ENCODE measurements at regions of chr9 and their contacts with region 1.

Region 1: GRCh38 chr9:127869310-127870152 is 7.9 kb downstream of the AK1 start:
- DNase-seq: peak; percentile 88
- H3K4me3 Mint-ChIP-seq: no peak overlapping the region
- H3K27ac Mint-ChIP-seq: no peak overlapping the region
- H3K4me1 Mint-ChIP-seq: peaks cover 14% of the 10 kb centered on the region
- H3K27me3 Mint-ChIP-seq: no peaks in the 10 kb centered on the region

Region 2: DNA sequence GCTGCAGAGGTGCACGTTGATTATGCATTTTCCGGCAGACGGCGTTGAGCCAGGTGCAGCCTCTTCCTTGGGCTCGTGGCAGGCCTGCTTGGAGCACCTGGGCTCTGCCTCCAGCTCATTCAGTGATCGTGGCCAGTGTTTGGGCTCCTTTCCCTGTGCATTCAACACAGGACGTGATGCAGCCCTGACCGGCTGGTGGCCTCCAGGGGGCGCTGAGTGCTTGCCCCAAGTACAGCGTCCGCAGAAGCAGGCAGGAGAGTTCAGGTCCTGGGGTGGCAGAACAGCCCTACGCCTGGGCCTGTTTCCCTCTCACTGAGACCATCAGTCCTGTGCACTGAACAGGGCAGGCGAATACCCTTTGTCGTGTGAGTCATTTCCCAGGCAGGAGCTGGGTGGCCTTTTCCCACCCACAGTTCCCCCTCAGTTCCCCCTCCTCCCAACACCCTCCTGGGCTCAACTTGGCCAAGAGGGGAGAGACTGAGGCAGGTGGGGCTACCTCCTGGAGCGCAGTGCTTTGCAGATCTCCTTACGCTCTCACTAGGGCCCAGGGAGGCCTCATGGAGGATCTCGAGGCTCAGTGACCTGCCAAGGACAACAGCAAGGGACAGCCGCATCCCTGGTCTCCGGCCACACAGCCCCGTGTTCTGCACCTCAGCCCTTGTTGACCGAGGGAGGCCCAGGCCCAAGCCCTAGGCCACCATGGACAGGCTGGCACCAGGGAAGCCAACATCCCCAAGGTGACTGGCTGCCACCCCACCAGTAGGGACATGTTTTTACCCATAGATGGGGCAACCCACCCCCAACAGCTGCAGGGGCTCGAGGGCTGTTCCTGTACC is 365.4 kb before region 1 on chr9:
- CTCF ChIA-PET with region 1: interaction called, 3 read pairs
- intact Hi-C with region 1: loop called (anchors 5 kb)
- DNase-seq: peak; percentile 88
- H3K4me3 Mint-ChIP-seq: no peak overlapping the region
- H3K27ac Mint-ChIP-seq: no peak overlapping the region
- H3K4me1 Mint-ChIP-seq: no peaks in the 10 kb centered on the region
- H3K27me3 Mint-ChIP-seq: no peaks in the 10 kb centered on the region

Region 3: DNA sequence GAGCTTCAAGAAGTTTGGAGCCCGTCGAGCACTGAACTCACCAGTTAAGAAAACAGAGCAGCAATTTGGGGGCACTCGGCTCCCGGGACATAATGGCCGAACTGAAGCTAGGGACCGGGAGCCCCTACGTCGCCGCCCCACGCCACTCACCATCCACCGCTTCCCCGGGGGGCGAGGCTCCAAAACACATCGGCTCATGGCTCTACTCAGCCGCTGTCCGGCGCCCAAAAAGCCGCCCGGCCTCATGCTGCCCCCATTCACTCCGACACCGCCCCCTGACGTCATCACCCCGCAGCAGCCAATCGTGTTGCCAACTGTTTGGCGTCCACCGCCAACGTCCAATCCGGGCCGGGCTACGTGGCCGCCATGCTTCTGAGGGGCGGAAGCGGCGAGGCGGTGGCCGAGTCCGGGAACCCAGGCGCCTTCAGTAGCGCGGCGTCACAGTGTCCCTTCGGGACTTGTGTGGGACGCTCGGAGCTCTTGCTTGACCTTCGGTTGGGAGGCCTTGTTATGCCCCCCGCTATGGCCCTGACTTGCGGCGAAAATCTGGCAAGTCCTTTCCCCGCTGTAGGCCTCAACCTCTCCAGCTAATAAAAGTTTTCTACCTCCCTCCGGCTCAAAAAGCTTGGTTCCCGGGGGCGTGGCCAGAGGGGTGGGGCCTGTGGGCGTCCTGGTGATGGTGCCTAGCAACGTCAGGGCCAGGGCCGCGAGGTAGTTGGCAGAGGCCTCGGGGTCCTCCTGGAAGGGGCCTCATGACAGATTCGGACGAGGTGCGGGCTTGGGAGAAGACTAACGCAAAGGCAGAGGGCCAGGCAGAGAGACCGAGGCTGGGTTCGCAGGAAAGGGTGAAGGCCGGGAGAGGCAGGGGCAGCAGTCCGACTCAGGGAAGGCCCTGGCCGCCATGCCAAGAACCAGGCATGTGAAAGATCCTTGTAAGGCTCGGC is 153.9 kb before region 1 on chr9 and contains the starts of genes PTRH1 and TTC16:
- CTCF ChIA-PET with region 1: interaction called, 14 read pairs
- intact Hi-C with region 1: no loop called
- DNase-seq: peak; percentile 98
- H3K4me3 Mint-ChIP-seq: peak within 1 kb of the TSS; percentile 97
- H3K27ac Mint-ChIP-seq: peak within 1 kb of the TSS; percentile 84
- H3K4me1 Mint-ChIP-seq: peaks cover 41% of the 10 kb centered on the region
- H3K27me3 Mint-ChIP-seq: no peaks in the 10 kb centered on the region
- total RNA-seq, gene PTRH1: 23.3 to 24.1 TPM
- total RNA-seq, gene TTC16: 0.50 to 0.79 TPM

Region 4: GRCh38 chr9:127785023-127785932 is 84.3 kb before region 1 on chr9:
- CTCF ChIA-PET with region 1: interaction called, 35 read pairs
- intact Hi-C with region 1: loop called (anchors 1 kb)
- DNase-seq: peak; percentile 91
- H3K4me3 Mint-ChIP-seq: peak overlapping the region; percentile 95
- H3K27ac Mint-ChIP-seq: peak overlapping the region; percentile 91
- H3K4me1 Mint-ChIP-seq: peaks cover 68% of the 10 kb centered on the region
- H3K27me3 Mint-ChIP-seq: no peaks in the 10 kb centered on the region

Region 5: DNA sequence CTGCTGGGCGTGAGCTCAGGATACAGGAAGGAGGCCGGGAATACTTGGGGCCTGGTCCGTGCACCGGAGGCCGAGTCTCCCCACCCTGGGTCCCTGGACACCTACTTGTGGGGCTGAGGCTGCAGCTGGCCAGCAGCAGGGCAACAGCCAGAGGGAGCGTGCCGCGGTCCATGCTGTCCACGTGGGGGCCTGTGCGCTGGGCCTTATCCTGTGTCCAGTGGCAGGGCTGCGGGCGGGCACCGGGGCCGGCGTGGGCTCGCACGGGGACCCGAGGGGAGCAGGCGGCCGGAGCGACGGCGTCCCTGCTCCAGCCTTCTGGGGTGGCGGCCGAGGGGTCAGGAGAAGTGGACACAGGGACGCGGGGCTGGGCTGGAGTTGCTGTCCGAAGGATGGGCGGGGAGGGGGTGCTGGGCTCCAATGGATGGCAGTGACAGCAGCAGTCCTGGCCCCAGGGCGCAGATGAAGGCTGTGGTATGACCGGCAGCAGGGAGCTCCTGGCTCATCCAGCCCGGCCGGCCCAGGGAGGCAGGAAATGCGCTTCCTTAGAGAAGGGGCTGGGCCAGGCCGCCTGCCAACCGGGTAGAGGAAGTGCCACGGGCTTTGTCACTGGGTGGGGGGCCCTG is 15.2 kb before region 1 on chr9 and contains the start of gene ENG:
- CTCF ChIA-PET with region 1: interaction called, 26 read pairs
- intact Hi-C with region 1: no loop called
- DNase-seq: peak; percentile 49
- H3K4me3 Mint-ChIP-seq: peak within 1 kb of the TSS; percentile 86
- H3K27ac Mint-ChIP-seq: peak within 1 kb of the TSS; percentile 81
- H3K4me1 Mint-ChIP-seq: peaks cover 32% of the 10 kb centered on the region
- H3K27me3 Mint-ChIP-seq: no peaks in the 10 kb centered on the region
- total RNA-seq, gene ENG: 10.5 to 11.6 TPM

Region 6: GRCh38 chr9:128322404-128323211 is 453.1 kb after region 1 on chr9 and contains the starts of genes COQ4 and TRUB2:
- CTCF ChIA-PET with region 1: no interaction called
- intact Hi-C with region 1: no loop called
- DNase-seq: peak; percentile 95
- H3K4me3 Mint-ChIP-seq: peak within 1 kb of the TSS; percentile 90
- H3K27ac Mint-ChIP-seq: peak within 1 kb of the TSS; percentile 94
- H3K4me1 Mint-ChIP-seq: peaks cover 22% of the 10 kb centered on the region
- H3K27me3 Mint-ChIP-seq: no peaks in the 10 kb centered on the region
- total RNA-seq, gene COQ4: 27.8 to 29.6 TPM
- total RNA-seq, gene TRUB2: 28.0 to 29.4 TPM